HepG2 (cell line): ENCODE measurements at regions of chr5 and their contacts with region 1.

Region 1: GRCh38 chr5:14727428-14727865 is 62.9 kb downstream of the OTULIN start:
- DNase-seq: peak; percentile 84
- ATAC-seq: peak; percentile 44
- H3K4me3 ChIP-seq: peak overlapping the region in 1 of 3 experiments; percentile 53; a peak in 1 of 6 replicates
- H3K27ac ChIP-seq: peak overlapping the region; percentile 96
- H3K4me1 ChIP-seq: peaks cover 28% of the 10 kb centered on the region
- H3K27me3 ChIP-seq: no peaks in the 10 kb centered on the region
- CTCF ChIP-seq: peak; percentile 92
- EP300 ChIP-seq: peak in 1 of 2 experiments; percentile 38; a peak in 1 of 4 replicates
- POLR2A ChIP-seq: no peak
- RAD21 ChIP-seq: peak; percentile 97

Region 2: GRCh38 chr5:14714706-14715105 is 12.7 kb before region 1 on chr5:
- CTCF ChIA-PET with region 1: no interaction called
- POLR2A ChIA-PET with region 1: no interaction called
- in situ Hi-C with region 1: no loop called
- intact Hi-C with region 1: no loop called
- DNase-seq: no peak
- ATAC-seq: no peak
- H3K4me3 ChIP-seq: no peak overlapping the region
- H3K27ac ChIP-seq: no peak overlapping the region
- H3K4me1 ChIP-seq: 0 out of 2 replicates have a peak, but pooled peaks cover 6% of the 10 kb centered on the region
- H3K27me3 ChIP-seq: no peaks in the 10 kb centered on the region
- CTCF ChIP-seq: no peak
- EP300 ChIP-seq: no peak
- POLR2A ChIP-seq: no peak
- RAD21 ChIP-seq: no peak

Region 3: GRCh38 chr5:14753912-14754311 is 26.5 kb after region 1 on chr5:
- CTCF ChIA-PET with region 1: no interaction called
- POLR2A ChIA-PET with region 1: interaction called, 13 read pairs
- in situ Hi-C with region 1: no loop called
- intact Hi-C with region 1: no loop called
- DNase-seq: no peak
- ATAC-seq: no peak
- H3K4me3 ChIP-seq: no peak overlapping the region
- H3K27ac ChIP-seq: peak overlapping the region; percentile 76
- H3K4me1 ChIP-seq: peaks cover 33% of the 10 kb centered on the region
- H3K27me3 ChIP-seq: no peaks in the 10 kb centered on the region
- CTCF ChIP-seq: no peak
- EP300 ChIP-seq: no peak
- POLR2A ChIP-seq: no peak
- RAD21 ChIP-seq: no peak

Region 4: DNA sequence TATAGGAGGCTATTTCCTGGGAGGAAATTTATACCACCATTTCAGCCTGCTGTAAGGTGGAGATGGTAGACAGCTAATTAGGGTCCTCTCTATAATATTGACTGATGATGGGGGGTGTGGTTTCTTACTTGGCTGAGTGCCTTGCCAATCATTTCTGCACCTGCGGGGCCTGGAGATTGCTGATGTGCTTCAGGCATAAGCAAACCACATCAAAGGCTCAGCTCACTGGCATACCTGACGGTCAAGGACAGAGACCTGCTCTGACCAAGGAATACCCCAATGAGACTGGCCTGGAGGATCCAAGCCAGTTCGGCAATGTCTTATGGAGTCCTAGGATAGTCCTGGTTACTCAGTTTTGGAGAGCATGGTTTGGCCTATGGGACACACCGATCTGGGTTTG is 114.7 kb after region 1 on chr5:
- CTCF ChIA-PET with region 1: no interaction called
- POLR2A ChIA-PET with region 1: no interaction called
- in situ Hi-C with region 1: no loop called
- intact Hi-C with region 1: loop called (anchors 1 kb)
- DNase-seq: peak; percentile 81
- ATAC-seq: peak; percentile 96
- H3K4me3 ChIP-seq: no peak overlapping the region
- H3K27ac ChIP-seq: no peak overlapping the region
- H3K4me1 ChIP-seq: peaks cover 20% of the 10 kb centered on the region
- H3K27me3 ChIP-seq: no peaks in the 10 kb centered on the region
- CTCF ChIP-seq: no peak
- EP300 ChIP-seq: no peak; a peak in 1 of 4 replicates
- POLR2A ChIP-seq: no peak
- RAD21 ChIP-seq: no peak

Region 5: GRCh38 chr5:14861123-14861765 is 133.8 kb after region 1 on chr5:
- CTCF ChIA-PET with region 1: no interaction called
- POLR2A ChIA-PET with region 1: no interaction called
- in situ Hi-C with region 1: no loop called
- intact Hi-C with region 1: no loop called
- DNase-seq: no peak
- ATAC-seq: peak; percentile 74
- H3K4me3 ChIP-seq: no peak overlapping the region
- H3K27ac ChIP-seq: no peak overlapping the region
- H3K4me1 ChIP-seq: peaks cover 35% of the 10 kb centered on the region
- H3K27me3 ChIP-seq: no peaks in the 10 kb centered on the region
- CTCF ChIP-seq: no peak
- EP300 ChIP-seq: no peak
- POLR2A ChIP-seq: no peak
- RAD21 ChIP-seq: no peak

Region 6: DNA sequence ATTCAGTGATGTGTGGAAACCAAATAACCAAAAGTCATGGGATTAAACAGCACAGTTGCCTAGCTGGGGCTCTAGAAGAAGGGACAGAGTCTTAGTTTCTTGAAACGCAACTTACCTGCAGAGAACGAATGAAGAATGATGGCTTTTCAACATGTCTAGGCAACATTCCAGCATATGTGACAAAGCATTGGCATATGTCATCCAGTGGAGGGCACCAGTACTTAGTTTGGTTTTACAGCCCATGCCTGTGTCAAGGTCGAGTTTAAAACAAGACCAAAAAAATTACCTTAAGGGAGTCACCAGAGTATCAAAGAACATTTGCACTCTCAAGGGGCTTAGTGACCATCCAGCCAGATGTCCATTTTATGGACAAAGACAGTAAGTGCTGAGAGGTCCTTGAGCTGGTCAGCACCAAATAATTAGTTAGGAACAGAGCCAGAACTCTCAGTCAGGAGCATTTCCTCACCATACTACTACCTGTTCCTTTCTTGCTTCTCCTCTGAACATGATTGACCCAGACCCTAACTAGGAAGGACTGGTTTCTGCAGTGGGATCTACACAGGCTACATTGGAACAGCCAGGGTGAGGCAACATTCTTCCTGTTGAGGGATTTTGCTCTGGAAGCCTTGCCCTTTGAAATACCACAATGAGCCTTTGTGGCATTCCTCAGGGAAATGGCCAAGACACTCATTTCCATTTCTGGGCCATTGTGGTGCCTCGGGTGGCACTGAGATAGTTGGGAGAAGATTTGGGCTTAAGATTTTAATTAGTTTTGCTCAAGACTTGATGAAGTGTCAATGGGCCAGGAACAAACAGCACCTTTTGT is 219.6 kb after region 1 on chr5:
- CTCF ChIA-PET with region 1: interaction called, 4 read pairs
- POLR2A ChIA-PET with region 1: no interaction called
- in situ Hi-C with region 1: no loop called
- intact Hi-C with region 1: loop called (anchors 1 kb)
- DNase-seq: peak; percentile 41
- ATAC-seq: peak; percentile 86
- H3K4me3 ChIP-seq: no peak overlapping the region
- H3K27ac ChIP-seq: no peak overlapping the region
- H3K4me1 ChIP-seq: peaks cover 20% of the 10 kb centered on the region
- H3K27me3 ChIP-seq: no peaks in the 10 kb centered on the region
- CTCF ChIP-seq: peak; percentile 71
- EP300 ChIP-seq: no peak
- POLR2A ChIP-seq: no peak
- RAD21 ChIP-seq: peak; percentile 29; the same call in 1 of the 2 replicates

Region 7: DNA sequence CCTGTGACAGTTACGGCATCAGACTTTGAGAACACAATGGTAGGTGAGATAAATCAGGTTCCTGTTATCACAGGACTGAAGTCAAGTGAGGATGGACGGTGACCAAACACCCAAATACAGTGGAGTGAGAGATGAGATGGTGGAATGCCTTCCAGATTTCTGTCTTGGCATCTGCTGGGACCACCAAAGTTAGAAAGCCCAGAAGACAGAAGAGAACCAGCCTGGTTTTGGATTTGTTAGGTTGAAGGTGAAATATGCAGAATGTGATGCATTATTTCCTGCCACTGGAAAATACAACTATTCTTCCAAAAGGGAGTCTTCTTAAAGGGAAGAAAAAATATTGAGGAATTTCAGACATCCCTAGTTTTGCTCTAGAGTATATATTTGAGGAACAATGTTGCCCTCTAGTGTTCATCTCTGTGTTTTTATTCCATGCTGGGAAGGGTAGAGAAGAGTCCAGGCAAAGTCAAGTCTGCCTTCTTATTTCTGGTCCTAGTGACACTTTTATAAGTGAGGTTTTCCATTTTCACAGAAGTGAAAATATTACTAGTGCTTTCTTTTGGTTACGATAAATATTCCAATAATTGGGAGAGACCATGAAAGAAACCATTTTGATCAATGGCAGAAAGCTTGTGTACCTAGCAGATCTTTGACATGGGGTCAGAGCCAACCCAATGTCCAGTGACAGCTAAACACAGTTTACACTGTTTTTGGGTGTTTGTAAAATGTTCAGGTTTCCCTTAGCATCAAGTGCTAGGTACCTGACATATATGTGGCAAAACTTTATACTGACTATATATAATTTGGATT is 286.4 kb after region 1 on chr5:
- CTCF ChIA-PET with region 1: interaction called, 34 read pairs
- POLR2A ChIA-PET with region 1: interaction called, 9 read pairs
- in situ Hi-C with region 1: loop called (anchors 5 kb)
- intact Hi-C with region 1: loop called (anchors 1 kb)
- DNase-seq: peak; percentile 75
- ATAC-seq: peak; percentile 81
- H3K4me3 ChIP-seq: no peak overlapping the region; a peak in 1 of 6 replicates
- H3K27ac ChIP-seq: no peak overlapping the region
- H3K4me1 ChIP-seq: peaks cover 59% of the 10 kb centered on the region
- H3K27me3 ChIP-seq: no peaks in the 10 kb centered on the region; a peak in 1 of 5 replicates
- CTCF ChIP-seq: peak; percentile 75
- EP300 ChIP-seq: no peak
- POLR2A ChIP-seq: no peak
- RAD21 ChIP-seq: peak; percentile 56; the same call in 1 of the 2 replicates